Mammary epithelial cell (primary cell): ENCODE measurements at regions of chr1 and their contacts with region 1.

Region 1: GRCh38 chr1:201970334-201971159 is 11.9 kb upstream of the RNPEP start:
- DNase-seq: no peak
- H3K4me3 ChIP-seq: no peak overlapping the region
- H3K27ac ChIP-seq: no peak overlapping the region
- H3K4me1 ChIP-seq: peaks cover 7% of the 10 kb centered on the region
- H3K27me3 ChIP-seq: no peaks in the 10 kb centered on the region
- CTCF ChIP-seq: no peak

Region 2: GRCh38 chr1:201530741-201531531 is 439.6 kb before region 1 on chr1:
- CTCF ChIA-PET with region 1: no interaction called
- dilution Hi-C with region 1: no loop called
- in situ Hi-C with region 1: no loop called
- intact Hi-C with region 1: loop called (anchors 1 kb)
- DNase-seq: peak; percentile 70
- H3K4me3 ChIP-seq: no peak overlapping the region
- H3K27ac ChIP-seq: no peak overlapping the region
- H3K4me1 ChIP-seq: peaks cover 15% of the 10 kb centered on the region
- H3K27me3 ChIP-seq: no peaks in the 10 kb centered on the region
- CTCF ChIP-seq: peak; percentile 86 to 88

Region 3: GRCh38 chr1:201828820-201829774 is 141.4 kb before region 1 on chr1 and contains the start of gene IPO9:
- CTCF ChIA-PET with region 1: no interaction called
- dilution Hi-C with region 1: no loop called
- in situ Hi-C with region 1: no loop called
- intact Hi-C with region 1: loop called (anchors 1 kb)
- DNase-seq: peak; percentile 90
- H3K4me3 ChIP-seq: peak within 1 kb of the TSS; percentile 74 to 90 (median 79)
- H3K27ac ChIP-seq: peak within 1 kb of the TSS; percentile 67
- H3K4me1 ChIP-seq: peaks cover 8% of the 10 kb centered on the region
- H3K27me3 ChIP-seq: no peaks in the 10 kb centered on the region
- CTCF ChIP-seq: peak; percentile 84 to 88
- total RNA-seq, gene IPO9: 22.7 to 61.3 TPM

Region 4: GRCh38 chr1:201890223-201890622 is 80.3 kb before region 1 on chr1:
- CTCF ChIA-PET with region 1: interaction called, 9 read pairs
- dilution Hi-C with region 1: no loop called
- in situ Hi-C with region 1: loop called (anchors 5 kb)
- intact Hi-C with region 1: no loop called
- DNase-seq: no peak
- H3K4me3 ChIP-seq: no peak overlapping the region
- H3K27ac ChIP-seq: no peak overlapping the region
- H3K4me1 ChIP-seq: peaks cover 18% of the 10 kb centered on the region
- H3K27me3 ChIP-seq: no peaks in the 10 kb centered on the region
- CTCF ChIP-seq: no peak

Region 5: DNA sequence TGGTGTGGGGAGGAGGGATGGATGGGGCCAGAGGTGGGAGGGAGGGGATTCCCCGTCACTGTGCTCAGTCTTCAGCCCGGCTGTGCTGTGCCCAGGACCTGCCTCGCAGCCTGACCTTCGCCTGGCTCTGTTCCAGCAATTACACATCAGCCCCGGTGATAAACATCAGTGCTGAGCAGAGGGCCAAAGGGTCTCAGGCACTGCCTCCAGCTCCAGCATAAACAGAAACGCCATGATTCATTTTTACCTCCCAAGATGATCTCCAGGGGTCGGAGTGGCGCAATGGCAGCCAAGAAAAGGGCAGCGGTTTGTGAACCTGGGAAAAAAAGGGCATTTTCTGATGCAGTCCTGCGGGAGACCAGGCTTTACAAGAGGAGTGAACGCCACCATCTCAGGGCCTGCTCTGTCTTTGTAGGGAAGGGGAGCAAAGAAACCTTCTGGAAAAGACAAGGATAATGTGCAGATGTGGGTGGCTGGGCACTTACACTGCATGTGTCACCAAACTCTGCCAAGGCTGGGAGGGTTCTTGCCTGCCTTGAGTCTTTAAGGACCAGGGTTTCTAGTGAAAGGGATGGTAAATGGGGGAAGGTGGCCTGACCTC is 53.8 kb before region 1 on chr1:
- CTCF ChIA-PET with region 1: no interaction called
- dilution Hi-C with region 1: no loop called
- in situ Hi-C with region 1: no loop called
- intact Hi-C with region 1: no loop called
- DNase-seq: peak; percentile 61
- H3K4me3 ChIP-seq: no peak overlapping the region
- H3K27ac ChIP-seq: no peak overlapping the region
- H3K4me1 ChIP-seq: peaks cover 16% of the 10 kb centered on the region
- H3K27me3 ChIP-seq: no peaks in the 10 kb centered on the region
- CTCF ChIP-seq: no peak

Region 6: DNA sequence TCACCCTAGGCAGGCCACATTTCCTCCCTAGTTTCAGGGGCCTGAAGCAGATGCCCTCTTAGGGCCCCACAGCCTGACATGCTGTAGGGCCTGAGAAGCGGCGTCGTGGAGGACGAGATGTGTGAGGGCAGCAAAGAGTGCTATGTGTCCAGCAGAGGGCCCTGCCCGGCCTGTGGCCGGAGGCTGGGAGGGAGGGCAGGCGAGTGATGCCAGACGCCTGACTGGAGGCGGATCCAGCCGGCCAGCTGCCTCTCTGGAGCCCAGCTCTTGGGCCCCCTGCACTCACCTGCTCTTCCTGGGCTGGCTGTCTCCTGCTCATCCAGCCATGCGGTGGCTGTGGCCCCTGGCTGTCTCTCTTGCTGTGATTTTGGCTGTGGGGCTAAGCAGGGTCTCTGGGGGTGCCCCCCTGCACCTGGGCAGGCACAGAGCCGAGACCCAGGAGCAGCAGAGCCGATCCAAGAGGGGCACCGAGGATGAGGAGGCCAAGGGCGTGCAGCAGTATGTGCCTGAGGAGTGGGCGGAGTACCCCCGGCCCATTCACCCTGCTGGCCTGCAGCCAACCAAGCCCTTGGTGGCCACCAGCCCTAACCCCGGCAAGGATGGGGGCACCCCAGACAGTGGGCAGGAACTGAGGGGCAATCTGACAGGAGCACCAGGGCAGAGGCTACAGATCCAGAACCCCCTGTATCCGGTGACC is 152.2 kb after region 1 on chr1 and contains the start of gene GPR37L1:
- CTCF ChIA-PET with region 1: no interaction called
- dilution Hi-C with region 1: no loop called
- in situ Hi-C with region 1: no loop called
- intact Hi-C with region 1: loop called (anchors 1 kb)
- DNase-seq: no peak
- H3K4me3 ChIP-seq: no peak within 1 kb of the TSS
- H3K27ac ChIP-seq: no peak within 1 kb of the TSS
- H3K4me1 ChIP-seq: no peaks in the 10 kb centered on the region
- H3K27me3 ChIP-seq: no peaks in the 10 kb centered on the region
- CTCF ChIP-seq: peak in 1 of 2 donors; percentile 26
- total RNA-seq, gene GPR37L1: not detected